Activated T-helper 2 cell treated with anti-CD3 and anti-CD28 coated beads, Interferon-gamma antibody, Interleukin-2, Interleukin-4, amounts not matched to agents 10 μg/mL and 5 μg/mL and 100 μg/mL, durations not matched to agents 14 hours and 24 hours and 36 hours (primary cell): ENCODE measurements at regions of chr6 and their contacts with region 1.

Region 1: GRCh38 chr6:30169658-30170614 is 6.6 kb downstream of the TRIM15 start:
- DNase-seq: peak; percentile 8
- H3K4me3 Mint-ChIP-seq: no peak overlapping the region
- H3K27ac Mint-ChIP-seq: no peak overlapping the region
- H3K4me1 Mint-ChIP-seq: peaks cover 23% of the 10 kb centered on the region
- H3K27me3 Mint-ChIP-seq: peaks cover 38% of the 10 kb centered on the region

Region 2: DNA sequence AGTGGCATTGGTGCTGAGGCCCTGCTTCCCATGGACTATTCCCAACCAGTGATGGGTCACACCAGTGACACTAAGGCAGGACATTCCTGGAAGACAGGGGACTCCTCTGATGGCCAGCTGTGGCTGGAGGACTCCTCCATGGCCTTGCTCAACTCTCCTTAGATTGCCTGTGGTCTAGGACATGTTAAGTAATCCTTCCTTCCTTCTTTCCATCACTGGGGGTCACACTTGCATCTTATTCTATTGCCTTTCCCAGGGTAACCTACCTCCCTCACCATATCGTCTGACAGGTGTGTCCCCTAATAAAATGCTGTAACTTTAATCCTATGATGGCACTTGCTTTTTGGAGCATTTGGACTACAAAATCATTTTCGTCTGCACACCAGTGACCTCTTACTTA is 252.1 kb before region 1 on chr6:
- intact Hi-C with region 1: no loop called
- DNase-seq: no peak
- H3K4me3 Mint-ChIP-seq: no peak overlapping the region
- H3K27ac Mint-ChIP-seq: no peak overlapping the region
- H3K4me1 Mint-ChIP-seq: peaks cover 5% of the 10 kb centered on the region
- H3K27me3 Mint-ChIP-seq: peaks cover 23% of the 10 kb centered on the region

Region 3: DNA sequence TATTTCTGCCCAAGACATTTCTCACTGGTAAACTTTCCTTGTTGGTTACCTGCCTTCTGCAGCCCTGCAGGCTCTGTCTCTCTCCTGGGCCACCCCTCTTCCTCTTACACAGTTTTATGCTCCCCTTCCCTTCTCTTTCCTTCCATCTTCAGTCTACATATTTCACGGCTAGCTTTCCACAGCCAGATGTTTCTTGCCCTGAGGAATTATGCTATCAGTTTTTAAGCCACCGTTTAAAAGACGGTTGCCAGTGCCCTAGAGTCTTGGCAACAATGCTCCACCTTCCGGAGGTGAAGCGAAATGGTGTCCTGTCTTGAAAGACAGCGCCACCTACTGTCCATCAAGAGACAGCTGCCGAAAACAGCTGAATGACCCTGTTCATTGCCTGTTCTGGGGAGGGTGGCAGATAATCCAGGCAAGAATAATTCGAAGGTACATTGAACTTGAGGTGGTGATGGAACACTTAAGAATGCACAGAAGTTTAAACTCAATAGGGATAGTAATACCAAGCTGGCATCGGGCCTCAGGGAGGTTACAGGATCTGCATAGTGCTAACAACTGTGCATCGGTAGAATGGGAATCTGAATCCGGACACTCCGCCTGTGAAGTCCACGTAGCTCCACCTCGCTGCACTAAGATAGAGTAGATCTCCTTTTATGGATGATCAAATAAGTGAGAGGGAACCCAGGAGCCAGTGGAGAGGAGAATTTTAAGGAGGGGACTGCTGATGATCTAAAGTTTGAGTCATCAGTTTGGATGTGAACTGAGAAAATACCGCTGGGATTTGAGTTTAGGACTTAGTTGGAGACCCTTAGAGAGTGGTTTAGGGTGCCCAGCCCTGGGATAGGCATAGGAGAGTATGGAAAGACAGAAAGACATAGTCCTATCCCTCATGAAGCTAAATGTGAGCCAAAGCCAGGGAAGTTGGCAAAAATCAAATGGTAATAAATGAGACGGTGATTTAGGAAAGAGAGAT is 38.8 kb before region 1 on chr6:
- intact Hi-C with region 1: loop called (anchors 2 kb)
- DNase-seq: peak; percentile 56
- H3K4me3 Mint-ChIP-seq: no peak overlapping the region
- H3K27ac Mint-ChIP-seq: no peak overlapping the region
- H3K4me1 Mint-ChIP-seq: peaks cover 18% of the 10 kb centered on the region
- H3K27me3 Mint-ChIP-seq: peaks cover 69% of the 10 kb centered on the region